H1 (cell line): ENCODE measurements at regions of chr19 and their contacts with region 1.

Region 1: GRCh38 chr19:30669329-30670010 is 297.3 kb downstream of the ZNF536 start:
- DNase-seq: peak in 1 of 2 experiments; percentile 95
- H3K4me3 ChIP-seq: peak overlapping the region in 1 of 4 experiments; percentile 38; a peak in 1 of 8 replicates
- H3K27ac ChIP-seq: no peak overlapping the region
- H3K4me1 ChIP-seq: peaks cover 0 to 3% (median 1%) of the 10 kb centered on the region in 4 experiments; a peak in 2 of 7 replicates
- H3K27me3 ChIP-seq: no peaks in the 10 kb centered on the region
- CTCF ChIP-seq: peak; percentile 77 to 82 (median 78)
- EP300 ChIP-seq: no peak
- POLR2A ChIP-seq: no peak
- RAD21 ChIP-seq: peak; percentile 79 to 83

Region 2: DNA sequence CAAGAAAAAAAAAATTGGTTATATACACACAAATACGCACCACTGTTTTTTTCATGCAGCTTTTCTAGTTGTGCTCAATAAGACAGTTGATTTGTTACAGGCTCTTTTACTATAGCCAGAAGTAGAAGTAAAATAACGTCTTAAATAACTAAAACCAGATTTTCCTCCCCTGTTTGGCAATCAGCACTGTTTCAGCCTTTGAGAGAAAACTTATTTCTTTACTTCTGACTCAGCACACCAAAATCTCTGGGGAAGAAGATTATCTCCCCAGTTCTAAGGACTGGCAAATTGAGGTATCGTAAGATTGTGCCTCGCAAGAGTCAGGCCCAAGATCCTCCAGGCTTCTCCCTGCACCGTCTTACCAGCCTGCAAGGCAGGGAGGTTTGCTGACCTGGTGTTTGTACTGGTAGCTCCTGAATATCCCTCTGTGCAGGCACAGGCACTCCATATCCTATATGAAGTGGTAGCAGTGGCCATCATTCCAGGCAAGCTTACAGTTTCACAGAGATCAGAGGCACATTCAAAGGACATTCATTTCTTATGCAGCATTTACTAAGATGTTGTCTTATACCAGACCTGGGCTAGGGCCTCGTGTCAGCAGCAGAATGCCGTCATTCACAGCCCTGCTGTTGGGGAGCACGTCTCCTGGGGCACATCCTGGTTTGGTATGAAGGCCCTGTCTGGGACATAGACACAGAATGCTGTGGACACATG is 29.1 kb before region 1 on chr19:
- CTCF ChIA-PET with region 1: no interaction called
- POLR2A ChIA-PET with region 1: no interaction called
- DNase-seq: no peak
- H3K4me3 ChIP-seq: no peak overlapping the region
- H3K27ac ChIP-seq: no peak overlapping the region
- H3K4me1 ChIP-seq: no peaks in the 10 kb centered on the region
- H3K27me3 ChIP-seq: no peaks in the 10 kb centered on the region
- CTCF ChIP-seq: no peak
- EP300 ChIP-seq: no peak
- POLR2A ChIP-seq: no peak
- RAD21 ChIP-seq: no peak

Region 3: DNA sequence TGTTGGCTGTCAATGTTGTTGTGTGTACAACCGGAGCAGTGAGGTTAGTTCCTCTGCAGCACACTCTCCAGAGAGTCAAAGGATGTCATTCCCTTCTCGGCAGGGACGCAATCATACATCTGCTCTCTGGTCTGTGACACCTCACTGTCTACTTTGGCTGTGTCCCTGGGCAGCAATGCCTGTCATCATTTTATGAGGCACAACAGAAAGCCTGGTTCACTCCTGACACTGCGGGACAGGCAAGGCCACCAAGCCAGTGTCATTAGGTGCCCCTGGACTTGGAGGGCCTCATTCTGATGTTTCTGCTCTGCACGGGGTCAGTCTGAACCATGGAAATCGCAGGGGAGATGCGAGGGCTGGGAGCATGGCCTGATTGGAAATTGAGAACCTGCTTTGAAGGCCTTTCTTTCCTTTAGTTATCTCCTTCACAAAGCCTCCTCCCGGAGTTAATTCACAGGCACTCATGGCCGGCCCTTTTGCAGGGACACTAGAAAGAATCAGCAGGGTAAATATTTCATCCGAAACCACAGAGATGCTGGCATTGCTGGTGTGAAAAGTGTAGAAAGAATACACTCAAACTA is 12.9 kb before region 1 on chr19:
- CTCF ChIA-PET with region 1: interaction called, 14 read pairs
- POLR2A ChIA-PET with region 1: no interaction called
- DNase-seq: no peak
- H3K4me3 ChIP-seq: no peak overlapping the region
- H3K27ac ChIP-seq: no peak overlapping the region
- H3K4me1 ChIP-seq: no peaks in the 10 kb centered on the region
- H3K27me3 ChIP-seq: no peaks in the 10 kb centered on the region; a peak in 1 of 7 replicates
- CTCF ChIP-seq: no peak
- EP300 ChIP-seq: no peak
- POLR2A ChIP-seq: no peak
- RAD21 ChIP-seq: no peak

Region 4: GRCh38 chr19:30682999-30683536 is 13.6 kb after region 1 on chr19:
- CTCF ChIA-PET with region 1: interaction called, 94 read pairs
- POLR2A ChIA-PET with region 1: no interaction called
- DNase-seq: peak in 1 of 2 experiments; percentile 82
- H3K4me3 ChIP-seq: no peak overlapping the region
- H3K27ac ChIP-seq: no peak overlapping the region
- H3K4me1 ChIP-seq: peaks cover 0 to 3% (median 0%) of the 10 kb centered on the region in 4 experiments; a peak in 2 of 7 replicates
- H3K27me3 ChIP-seq: no peaks in the 10 kb centered on the region
- CTCF ChIP-seq: peak; percentile 79 to 88 (median 86)
- EP300 ChIP-seq: no peak
- POLR2A ChIP-seq: no peak
- RAD21 ChIP-seq: peak; percentile 92 to 94

Region 5: DNA sequence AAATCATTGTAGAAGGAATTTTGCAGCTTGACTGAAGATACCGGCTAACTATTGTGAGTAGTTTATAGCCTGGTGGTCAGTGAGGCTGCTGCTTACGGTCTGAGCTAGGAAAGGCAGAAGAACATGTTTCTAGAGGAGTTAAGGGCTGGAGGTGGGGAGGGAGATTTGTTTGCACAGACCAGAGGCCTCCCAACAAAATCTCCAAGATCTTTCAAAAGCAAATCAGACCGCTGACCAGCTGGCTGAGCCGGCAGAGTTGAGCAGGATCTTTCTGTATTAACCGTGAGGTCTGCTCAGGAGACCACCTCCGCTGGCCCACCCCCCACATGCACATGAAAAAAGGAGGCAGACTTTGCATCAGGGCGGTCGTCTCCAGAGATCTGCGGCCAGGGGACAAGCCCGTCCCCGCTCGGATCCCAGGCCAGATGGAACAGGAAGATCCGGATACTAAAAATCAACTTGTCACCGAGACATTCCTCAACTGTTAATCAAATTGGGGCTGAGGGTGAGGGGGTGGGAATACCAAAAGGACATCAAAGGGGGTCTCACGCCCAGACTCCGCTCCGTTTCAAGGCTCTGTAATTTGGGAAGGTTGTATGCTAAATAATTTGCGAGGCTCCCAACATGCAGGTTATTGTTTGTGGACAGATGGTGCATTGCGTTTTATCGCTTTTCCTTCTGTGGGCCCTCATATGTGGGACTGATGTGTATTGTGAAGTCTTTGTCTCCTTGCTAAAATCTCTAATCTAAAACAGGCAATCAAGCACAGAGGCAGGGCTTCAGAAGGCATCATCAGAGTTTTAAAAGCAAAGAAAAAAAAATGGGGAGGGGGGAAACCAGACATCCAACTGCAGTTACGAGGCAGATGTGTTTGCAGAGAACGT is 21.7 kb after region 1 on chr19:
- CTCF ChIA-PET with region 1: interaction called, 94 read pairs
- POLR2A ChIA-PET with region 1: no interaction called
- DNase-seq: no peak
- H3K4me3 ChIP-seq: peak overlapping the region in 1 of 4 experiments; percentile 25; a peak in 1 of 8 replicates
- H3K27ac ChIP-seq: no peak overlapping the region
- H3K4me1 ChIP-seq: peaks cover 0 to 9% (median 7%) of the 10 kb centered on the region in 4 experiments; a peak in 4 of 7 replicates
- H3K27me3 ChIP-seq: no peaks in the 10 kb centered on the region
- CTCF ChIP-seq: no peak
- EP300 ChIP-seq: no peak
- POLR2A ChIP-seq: no peak
- RAD21 ChIP-seq: no peak

Region 6: DNA sequence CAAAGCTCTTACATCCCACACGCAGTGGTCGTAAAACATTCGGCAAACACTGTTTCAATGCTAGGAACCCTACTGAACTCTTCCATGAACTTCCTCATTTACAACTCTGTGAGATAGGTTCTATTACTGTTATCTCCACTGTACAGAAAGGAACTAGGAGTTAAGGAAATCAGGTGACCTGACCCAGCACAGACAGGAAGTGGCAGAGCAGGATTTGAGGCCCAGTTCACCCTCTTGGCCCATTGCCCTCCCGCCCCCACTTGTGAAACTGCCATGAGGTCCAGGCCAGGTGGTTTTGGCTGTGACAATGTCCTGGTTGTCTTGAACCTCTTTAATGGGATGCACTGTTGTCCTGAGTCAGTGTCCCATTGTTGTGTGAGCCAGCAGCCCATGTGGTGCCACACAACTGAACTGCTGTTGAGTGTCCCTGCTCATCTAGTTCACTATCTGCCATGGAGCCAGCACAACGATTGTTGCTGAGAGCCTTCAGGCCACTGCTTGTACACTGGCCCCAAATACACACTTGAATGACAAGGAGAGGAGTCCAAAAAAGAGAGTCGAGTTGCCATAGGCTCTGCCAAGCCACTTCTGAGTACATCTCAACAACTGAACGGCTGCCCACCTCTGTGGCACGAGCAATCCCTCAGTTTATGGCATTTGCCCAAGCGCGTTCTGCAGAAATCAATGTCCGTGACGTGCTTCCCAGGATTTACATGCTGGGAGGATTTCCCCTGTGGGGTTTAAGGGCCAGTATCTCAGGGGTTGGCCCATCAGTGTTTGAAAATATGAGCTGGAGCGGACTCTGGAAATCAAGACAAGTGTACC is 195.1 kb after region 1 on chr19:
- CTCF ChIA-PET with region 1: no interaction called
- POLR2A ChIA-PET with region 1: no interaction called
- DNase-seq: no peak
- H3K4me3 ChIP-seq: no peak overlapping the region
- H3K27ac ChIP-seq: no peak overlapping the region
- H3K4me1 ChIP-seq: no peaks in the 10 kb centered on the region
- H3K27me3 ChIP-seq: no peaks in the 10 kb centered on the region
- CTCF ChIP-seq: no peak
- EP300 ChIP-seq: no peak
- POLR2A ChIP-seq: no peak
- RAD21 ChIP-seq: no peak